CD4-positive, alpha-beta T cell (primary cell): ENCODE measurements at regions of chr2 and their contacts with region 1.

Region 1: DNA sequence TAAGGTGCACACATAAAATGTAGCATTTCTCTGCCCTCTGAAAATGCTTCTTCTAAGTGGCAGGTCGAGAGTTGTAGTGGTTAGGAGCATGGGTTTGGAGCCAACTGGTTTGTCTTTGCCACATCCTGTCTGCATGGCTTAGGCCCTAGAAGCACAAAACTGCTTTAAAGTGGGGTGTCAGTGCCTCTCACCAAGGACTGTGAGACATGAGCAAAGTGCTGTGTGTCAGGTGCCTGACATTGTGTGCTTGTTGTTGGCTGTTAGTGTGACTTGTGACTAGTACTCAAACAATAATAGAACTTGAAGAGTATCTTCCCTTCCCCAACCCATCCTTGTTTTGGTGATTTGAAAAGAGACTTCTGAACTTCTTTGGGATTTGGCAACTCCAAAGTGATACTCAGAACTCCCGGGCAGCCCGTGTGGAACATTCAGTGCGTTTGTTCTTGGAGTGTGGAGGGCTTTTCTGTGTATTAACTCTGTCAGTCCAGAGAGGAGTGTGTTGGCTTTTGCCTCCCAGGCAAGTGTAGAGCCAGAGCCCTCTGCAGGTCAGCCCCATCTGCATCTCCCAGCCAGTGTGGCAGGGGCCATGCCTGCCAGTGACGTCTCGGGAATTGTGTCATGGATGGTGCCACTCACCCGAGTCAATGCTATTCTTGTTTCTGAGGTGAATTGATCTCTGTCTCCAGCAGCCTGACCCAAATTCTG is 5.0 kb downstream of the MGAT5 start:
- DNase-seq: peak; percentile 43 to 85 (median 60)
- ATAC-seq: peak; percentile 90
- H3K4me3 ChIP-seq: no peak overlapping the region
- H3K4me3 Mint-ChIP-seq: peak overlapping the region; percentile 77
- H3K27ac ChIP-seq: peak overlapping the region; percentile 44 to 49
- H3K27ac Mint-ChIP-seq: peak overlapping the region; percentile 91
- H3K4me1 ChIP-seq: peaks cover 69% of the 10 kb centered on the region
- H3K4me1 Mint-ChIP-seq: peaks cover 95% of the 10 kb centered on the region
- H3K27me3 ChIP-seq: no peaks in the 10 kb centered on the region
- H3K27me3 Mint-ChIP-seq: no peaks in the 10 kb centered on the region
- CTCF ChIP-seq: no peak

Region 2: GRCh38 chr2:134282629-134283400 is 24.0 kb after region 1 on chr2:
- CTCF ChIA-PET with region 1: interaction called, 3 read pairs
- POLR2A ChIA-PET with region 1: interaction called, 4 read pairs
- intact Hi-C with region 1: loop called in 1 of 2 experiments (anchors 2 kb)
- DNase-seq: peak in 5 of 14 experiments; percentile 11 to 50 (median 47)
- ATAC-seq: peak; percentile 78
- H3K4me3 ChIP-seq: no peak overlapping the region
- H3K4me3 Mint-ChIP-seq: peak overlapping the region; percentile 61
- H3K27ac ChIP-seq: peak overlapping the region; percentile 58 to 61
- H3K27ac Mint-ChIP-seq: peak overlapping the region; percentile 82
- H3K4me1 ChIP-seq: peaks cover 56% of the 10 kb centered on the region
- H3K4me1 Mint-ChIP-seq: peaks cover 75% of the 10 kb centered on the region
- H3K27me3 ChIP-seq: no peaks in the 10 kb centered on the region
- H3K27me3 Mint-ChIP-seq: no peaks in the 10 kb centered on the region
- CTCF ChIP-seq: no peak

Region 3: GRCh38 chr2:134290358-134290757 is 31.5 kb after region 1 on chr2:
- CTCF ChIA-PET with region 1: interaction called, 3 read pairs
- POLR2A ChIA-PET with region 1: interaction called, 3 read pairs
- intact Hi-C with region 1: loop called in 1 of 2 experiments (anchors 5 kb)
- DNase-seq: peak in 4 of 14 experiments; percentile 21 to 59 (median 34)
- ATAC-seq: peak; percentile 59
- H3K4me3 ChIP-seq: peak overlapping the region; percentile 12
- H3K4me3 Mint-ChIP-seq: no peak overlapping the region
- H3K27ac ChIP-seq: peak overlapping the region in 1 of 2 donors; percentile 18
- H3K27ac Mint-ChIP-seq: no peak overlapping the region
- H3K4me1 ChIP-seq: peaks cover 71% of the 10 kb centered on the region
- H3K4me1 Mint-ChIP-seq: peaks cover 8% of the 10 kb centered on the region
- H3K27me3 ChIP-seq: no peaks in the 10 kb centered on the region
- H3K27me3 Mint-ChIP-seq: no peaks in the 10 kb centered on the region
- CTCF ChIP-seq: no peak